A549 (cell line): ENCODE measurements at regions of chr12 and their contacts with region 1.

Region 1: DNA sequence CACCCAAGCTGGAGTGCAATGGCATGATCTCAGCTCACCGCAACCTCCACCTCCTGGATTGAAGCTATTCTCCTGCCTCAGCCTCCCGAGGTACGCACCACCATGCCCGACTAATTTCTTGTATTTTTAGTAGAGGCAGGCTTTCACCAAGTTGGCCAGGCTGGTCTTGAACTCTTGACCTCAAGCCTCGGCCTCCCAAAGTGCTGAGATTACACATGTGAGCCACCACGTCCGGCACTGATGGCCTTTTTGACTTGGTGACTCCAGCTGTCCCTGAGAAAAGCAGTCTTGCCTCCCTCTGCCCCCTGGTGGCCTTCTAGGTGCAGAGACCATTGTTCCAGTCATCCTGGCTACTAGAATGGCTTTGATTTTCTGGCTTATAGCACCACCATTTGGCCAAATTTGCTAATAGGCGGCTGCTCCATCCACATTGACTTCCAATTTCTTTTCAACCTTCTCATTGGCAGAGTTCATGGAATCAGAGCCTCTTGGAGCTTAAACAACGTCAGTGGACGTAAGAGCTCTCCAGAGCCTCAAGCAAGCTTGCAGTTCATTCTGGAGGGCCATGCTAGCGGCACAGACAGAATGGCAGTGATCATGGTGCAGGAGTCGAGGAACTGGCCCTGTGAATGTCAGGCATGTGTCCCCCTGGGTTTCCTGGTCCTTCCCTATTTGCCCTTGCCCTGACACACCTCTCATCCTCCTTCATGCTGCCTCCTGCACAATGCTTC is 25.4 kb upstream of the EIF4B start:
- DNase-seq: peak; percentile 89 to 97
- ATAC-seq: peak; percentile 76 to 84
- H3K4me3 ChIP-seq: no peak overlapping the region
- H3K27ac ChIP-seq: peak overlapping the region; percentile 39 to 91
- H3K4me1 ChIP-seq: peaks cover 28% of the 10 kb centered on the region
- CTCF ChIP-seq: peak; percentile 100
- EP300 ChIP-seq: no peak
- POLR2A ChIP-seq: no peak
- RAD21 ChIP-seq: peak; percentile 100

Region 2: GRCh38 chr12:52139552-52140062 is 841.3 kb before region 1 on chr12:
- CTCF ChIA-PET with region 1: interaction called, 62 read pairs
- POLR2A ChIA-PET with region 1: no interaction called
- DNase-seq: peak; percentile 68 to 90
- ATAC-seq: peak; percentile 64 to 66; a peak in 5 of 6 replicates
- H3K4me3 ChIP-seq: no peak overlapping the region
- H3K27ac ChIP-seq: peak overlapping the region; percentile 100; a peak in 5 of 6 replicates
- H3K4me1 ChIP-seq: peaks cover 26% of the 10 kb centered on the region
- CTCF ChIP-seq: peak; percentile 97
- EP300 ChIP-seq: no peak
- POLR2A ChIP-seq: no peak
- RAD21 ChIP-seq: peak; percentile 92 to 97

Region 3: GRCh38 chr12:52759695-52760094 is 221.2 kb before region 1 on chr12:
- CTCF ChIA-PET with region 1: no interaction called
- POLR2A ChIA-PET with region 1: no interaction called
- DNase-seq: peak in 1 of 2 experiments; percentile 16
- ATAC-seq: no peak; a peak in 1 of 6 replicates
- H3K4me3 ChIP-seq: no peak overlapping the region
- H3K27ac ChIP-seq: no peak overlapping the region
- H3K4me1 ChIP-seq: no peaks in the 10 kb centered on the region
- CTCF ChIP-seq: no peak
- EP300 ChIP-seq: no peak
- POLR2A ChIP-seq: no peak
- RAD21 ChIP-seq: 0 out of 5 replicates have a peak, but pooled peaks of 1 of the 2 experiments have one; percentile 25

Region 4: GRCh38 chr12:52865090-52865944 is 115.5 kb before region 1 on chr12:
- CTCF ChIA-PET with region 1: interaction called, 17 read pairs
- POLR2A ChIA-PET with region 1: no interaction called
- DNase-seq: peak; percentile 92 to 94
- ATAC-seq: peak; percentile 79 to 86
- H3K4me3 ChIP-seq: no peak overlapping the region
- H3K27ac ChIP-seq: peak overlapping the region; percentile 61 to 73
- H3K4me1 ChIP-seq: peaks cover 41% of the 10 kb centered on the region
- CTCF ChIP-seq: peak; percentile 77
- EP300 ChIP-seq: no peak
- POLR2A ChIP-seq: no peak
- RAD21 ChIP-seq: peak; percentile 91 to 96

Region 5: GRCh38 chr12:52903285-52903854 is 77.5 kb before region 1 on chr12:
- CTCF ChIA-PET with region 1: interaction called, 332 read pairs
- POLR2A ChIA-PET with region 1: interaction called, 19 read pairs
- DNase-seq: peak; percentile 50 to 69
- ATAC-seq: peak; percentile 26 to 39; a peak in 5 of 6 replicates
- H3K4me3 ChIP-seq: peak overlapping the region; percentile 87
- H3K27ac ChIP-seq: peak overlapping the region; percentile 91 to 99
- H3K4me1 ChIP-seq: peaks cover 72% of the 10 kb centered on the region
- CTCF ChIP-seq: no peak
- EP300 ChIP-seq: no peak
- POLR2A ChIP-seq: peak; percentile 9; the same call in 1 of the 2 replicates
- RAD21 ChIP-seq: 0 out of 5 replicates have a peak, but pooled peaks of 1 of the 2 experiments have one; percentile 2

Region 6: DNA sequence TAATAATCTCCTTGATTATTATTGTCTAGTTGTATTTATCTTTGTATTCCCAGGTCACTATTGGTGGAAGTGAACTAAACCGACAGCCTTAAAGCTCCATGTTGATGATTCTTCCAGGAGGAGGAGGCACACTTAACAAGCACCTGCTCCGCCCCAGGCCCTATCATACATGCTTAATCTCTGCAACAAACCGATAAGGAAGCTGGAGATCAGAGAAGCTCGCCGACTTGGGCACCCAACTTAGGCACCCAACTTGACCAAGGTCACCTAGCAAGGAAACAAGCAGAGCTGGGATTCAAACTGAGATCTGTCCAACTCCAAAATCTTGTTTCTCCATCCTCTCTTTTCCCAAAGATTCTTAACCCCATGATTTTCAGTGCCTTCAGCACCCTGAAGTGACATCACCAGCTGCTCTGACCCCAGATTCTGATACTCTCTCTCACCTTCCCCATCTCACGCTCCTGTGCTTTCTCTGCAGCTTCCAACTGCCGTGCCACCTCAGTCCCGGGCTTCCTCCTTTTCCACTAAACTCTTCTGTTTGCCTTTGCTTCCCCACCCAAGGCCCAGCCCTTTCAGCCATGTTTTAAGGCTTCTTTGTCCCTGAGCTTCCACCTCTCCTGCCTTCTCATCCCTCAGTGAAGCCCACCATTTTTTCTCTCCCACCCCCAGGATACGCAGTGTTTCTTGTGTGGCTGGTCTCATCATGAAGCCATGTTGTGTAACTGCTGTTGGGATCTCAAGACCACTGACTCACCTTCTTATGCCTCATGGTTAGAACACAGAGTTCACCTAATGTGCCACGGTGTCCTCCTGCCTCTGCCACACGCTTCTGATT is 38.6 kb before region 1 on chr12:
- CTCF ChIA-PET with region 1: interaction called, 36 read pairs
- POLR2A ChIA-PET with region 1: no interaction called
- DNase-seq: no peak
- ATAC-seq: no peak
- H3K4me3 ChIP-seq: no peak overlapping the region
- H3K27ac ChIP-seq: peak overlapping the region; percentile 96 to 97
- H3K4me1 ChIP-seq: peaks cover 50% of the 10 kb centered on the region
- CTCF ChIP-seq: no peak
- EP300 ChIP-seq: no peak
- POLR2A ChIP-seq: no peak
- RAD21 ChIP-seq: no peak

Region 7: GRCh38 chr12:52969828-52970569 is 10.9 kb before region 1 on chr12:
- CTCF ChIA-PET with region 1: interaction called, 171 read pairs
- POLR2A ChIA-PET with region 1: interaction called, 9 read pairs
- DNase-seq: peak in 1 of 2 experiments; percentile 96
- ATAC-seq: peak; percentile 39 to 67
- H3K4me3 ChIP-seq: 0 out of 3 replicates have a peak overlapping the region, but pooled peaks have one; percentile 3
- H3K27ac ChIP-seq: peak overlapping the region; percentile 90 to 91
- H3K4me1 ChIP-seq: peaks cover 72% of the 10 kb centered on the region
- CTCF ChIP-seq: no peak
- EP300 ChIP-seq: peak; percentile 72 to 91; a peak in 4 of 5 replicates
- POLR2A ChIP-seq: no peak
- RAD21 ChIP-seq: 0 out of 5 replicates have a peak, but pooled peaks of 1 of the 2 experiments have one; percentile 1

Region 8: GRCh38 chr12:53701518-53702260 is 720.8 kb after region 1 on chr12:
- CTCF ChIA-PET with region 1: no interaction called
- POLR2A ChIA-PET with region 1: no interaction called
- DNase-seq: peak; percentile 76 to 84
- ATAC-seq: peak; percentile 94 to 98
- H3K4me3 ChIP-seq: no peak overlapping the region
- H3K27ac ChIP-seq: no peak overlapping the region
- H3K4me1 ChIP-seq: no peaks in the 10 kb centered on the region
- CTCF ChIP-seq: peak; percentile 96
- EP300 ChIP-seq: no peak
- POLR2A ChIP-seq: no peak
- RAD21 ChIP-seq: peak; percentile 95 to 98